ENCODE measurements at regions of chrX and their contacts with region 1.

Region 1: DNA sequence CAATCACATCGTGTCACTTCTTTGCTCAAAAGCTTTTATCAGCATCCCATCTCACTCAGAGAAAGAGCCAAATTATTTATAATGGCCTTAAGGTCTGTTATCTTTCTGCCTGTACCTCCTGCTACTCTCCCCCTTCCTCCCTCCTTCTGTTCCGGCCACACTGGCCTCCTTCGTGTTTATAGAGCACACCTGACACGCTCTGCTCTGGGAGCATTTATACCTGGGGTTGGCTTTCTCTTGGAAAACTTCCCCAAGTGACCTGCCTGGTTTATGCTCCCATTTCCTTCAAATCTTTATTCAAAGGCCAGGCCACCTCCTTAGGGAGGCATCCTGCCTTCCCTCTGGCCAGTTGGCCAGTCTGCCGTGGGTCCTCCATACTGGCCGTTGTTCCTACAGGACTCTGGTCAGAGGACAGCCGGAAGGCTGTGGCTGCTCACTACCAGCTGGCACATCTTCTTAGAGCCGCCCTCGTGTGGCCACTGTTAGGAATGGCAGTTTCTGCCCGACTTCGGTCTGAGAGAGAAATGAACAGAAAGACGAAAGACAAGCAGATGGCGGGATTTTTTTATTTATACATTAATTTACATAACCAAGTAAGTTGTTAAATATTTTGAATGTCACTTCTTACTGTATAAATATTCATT is 80.2 kb upstream of the CBLL2 start:
- DNase-seq: peak; percentile 21 to 50
- ATAC-seq: peak in 5 of 8 donors; percentile 47 to 75 (median 63)
- H3K4me3 ChIP-seq: no peak overlapping the region
- H3K27ac ChIP-seq: no peak overlapping the region
- H3K4me1 ChIP-seq: peaks cover 0 to 3% (median 0%) of the 10 kb centered on the region in 9 donors
- H3K27me3 ChIP-seq: peaks cover 0 to 26% (median 0%) of the 10 kb centered on the region in 7 donors
- CTCF ChIP-seq: peak in 8 of 9 donors; percentile 30 to 85 (median 70)

Region 2: GRCh38 chrX:21993265-21993664 is 199.3 kb before region 1 on chrX:
- intact Hi-C with region 1: loop called in 2 of 10 experiments (anchors 10 kb)
- DNase-seq: peak; percentile 7 to 14
- ATAC-seq: peak in 6 of 8 donors; percentile 39 to 79 (median 48)
- H3K4me3 ChIP-seq: no peak overlapping the region
- H3K27ac ChIP-seq: peak overlapping the region in 3 of 10 donors; percentile 26 to 87 (median 40)
- H3K4me1 ChIP-seq: peaks cover 0 to 15% (median 0%) of the 10 kb centered on the region in 9 donors
- H3K27me3 ChIP-seq: no peaks in the 10 kb centered on the region
- CTCF ChIP-seq: no peak

Region 3: DNA sequence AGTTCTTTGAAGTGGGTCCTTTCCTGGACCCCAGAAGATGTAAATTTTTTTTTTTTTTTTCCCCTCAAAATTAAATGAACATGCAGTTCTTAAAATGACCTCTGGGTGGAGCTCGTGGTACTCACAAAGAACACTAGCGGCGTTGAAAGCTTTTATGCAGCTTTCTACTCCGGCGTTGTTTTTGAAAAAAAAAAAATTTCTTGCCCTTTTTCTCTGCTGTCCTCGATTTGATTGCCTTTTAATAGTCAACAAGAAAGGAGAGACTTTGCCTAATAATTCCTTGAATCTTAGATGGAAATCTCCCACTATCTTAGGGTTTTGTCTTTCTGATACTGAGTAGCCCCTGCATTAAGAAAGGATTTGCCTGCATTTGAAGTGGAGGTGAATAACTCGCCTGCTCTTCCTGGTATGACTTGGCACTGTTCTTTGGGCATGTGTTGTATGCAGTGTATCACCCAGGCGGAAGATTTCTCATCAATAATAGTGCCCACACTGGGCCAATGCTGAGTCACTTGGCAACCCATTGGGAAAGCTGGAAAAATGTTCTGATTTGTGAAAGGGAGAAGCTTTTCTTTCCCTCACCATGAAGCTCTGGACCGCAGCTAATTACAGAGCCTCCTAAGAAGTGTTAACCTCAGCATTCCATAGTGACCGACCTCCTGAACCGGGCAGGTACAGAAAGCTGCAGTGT is 56.4 kb before region 1 on chrX:
- intact Hi-C with region 1: loop called in 4 of 10 experiments (anchors 1 to 10 kb)
- DNase-seq: peak in 1 of 2 donors; percentile 5
- ATAC-seq: peak in 3 of 8 donors; percentile 14 to 56 (median 16)
- H3K4me3 ChIP-seq: no peak overlapping the region
- H3K27ac ChIP-seq: peak overlapping the region in 2 of 10 donors; percentile 40 to 50
- H3K4me1 ChIP-seq: peaks cover 0 to 9% (median 0%) of the 10 kb centered on the region in 9 donors
- H3K27me3 ChIP-seq: peaks cover 0 to 23% (median 0%) of the 10 kb centered on the region in 7 donors
- CTCF ChIP-seq: peak; percentile 46 to 81 (median 65)

Region 4: DNA sequence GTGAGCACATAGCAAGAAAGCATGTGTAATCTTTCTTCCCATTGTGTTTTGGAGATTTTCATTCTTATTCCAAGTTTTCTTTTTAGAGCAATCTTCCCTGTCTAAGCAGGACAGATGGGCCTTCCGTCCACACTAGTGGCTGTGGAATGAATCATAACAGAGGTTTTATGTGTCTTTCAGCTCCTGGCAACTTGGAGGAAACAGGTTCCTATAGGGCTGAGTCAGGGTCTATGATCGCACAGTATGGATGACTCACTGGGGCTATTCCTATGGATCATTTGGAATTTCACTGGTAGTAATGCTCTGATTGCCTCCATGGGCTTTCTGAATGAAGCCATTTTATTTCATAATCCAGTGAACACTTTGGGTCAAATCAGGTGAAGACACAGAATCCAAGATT is 28.4 kb after region 1 on chrX:
- intact Hi-C with region 1: no loop called
- DNase-seq: no peak
- ATAC-seq: no peak
- H3K4me3 ChIP-seq: no peak overlapping the region
- H3K27ac ChIP-seq: no peak overlapping the region
- H3K4me1 ChIP-seq: no peaks in the 10 kb centered on the region
- H3K27me3 ChIP-seq: no peaks in the 10 kb centered on the region
- CTCF ChIP-seq: no peak

Region 5: DNA sequence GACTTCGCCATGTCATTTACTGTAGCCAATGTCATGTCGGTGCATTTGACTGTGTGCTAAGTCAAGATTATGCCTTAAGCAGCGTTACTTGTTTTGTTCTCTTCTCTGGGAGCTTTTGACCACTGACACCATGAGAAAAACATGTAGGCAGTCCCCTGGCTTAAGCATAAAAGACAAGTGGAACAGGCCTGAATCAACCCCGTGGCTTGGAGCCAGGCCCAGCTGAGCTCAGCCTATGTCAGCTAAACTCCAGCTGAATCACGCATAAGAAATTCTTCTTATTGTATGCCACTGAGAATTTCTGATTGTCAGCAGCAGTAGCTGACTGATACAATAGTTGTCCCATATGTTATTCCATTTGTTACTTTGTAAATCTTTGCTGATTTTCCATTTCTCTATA is 342.1 kb after region 1 on chrX:
- intact Hi-C with region 1: no loop called
- DNase-seq: peak; percentile 3 to 6
- ATAC-seq: peak in 2 of 8 donors; percentile 44 to 52
- H3K4me3 ChIP-seq: no peak overlapping the region
- H3K27ac ChIP-seq: no peak overlapping the region
- H3K4me1 ChIP-seq: no peaks in the 10 kb centered on the region
- H3K27me3 ChIP-seq: no peaks in the 10 kb centered on the region
- CTCF ChIP-seq: no peak

Measured in heart right ventricle (tissue), 16 donors.